H1 (cell line): ENCODE measurements at regions of chr15 and their contacts with region 1.

Region 1: DNA sequence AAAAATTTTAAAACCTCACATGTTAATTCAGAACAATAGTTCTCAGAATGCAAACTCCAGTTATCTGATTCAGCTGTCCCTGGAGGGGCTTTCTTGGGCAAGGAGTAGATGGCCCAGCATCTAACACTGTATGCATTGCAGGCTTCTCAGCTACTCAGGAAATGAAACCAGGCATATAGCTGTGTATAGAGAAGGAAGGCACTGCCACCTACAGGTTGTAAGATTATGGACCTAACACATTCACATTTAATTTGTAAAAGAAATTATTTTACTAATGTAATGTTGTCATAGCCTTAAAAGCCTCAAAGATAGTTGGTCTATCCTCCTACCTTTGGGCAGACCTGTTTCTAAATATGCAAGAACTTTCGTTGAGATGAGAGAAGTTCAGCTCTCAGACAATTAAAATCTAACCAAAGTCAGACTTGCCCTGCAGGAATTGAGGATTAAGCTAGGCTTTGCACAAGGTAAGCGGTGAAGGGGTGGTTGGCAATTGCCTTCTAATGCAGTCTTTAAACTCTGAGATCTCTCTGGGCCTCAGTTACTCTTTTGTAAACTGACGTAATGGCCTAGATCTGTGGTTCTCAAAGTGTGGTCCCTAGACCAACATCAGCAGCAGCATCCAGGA is 132.8 kb upstream of the SLC24A5 start:
- DNase-seq: no peak
- H3K4me3 ChIP-seq: no peak overlapping the region
- H3K27ac ChIP-seq: no peak overlapping the region
- H3K4me1 ChIP-seq: no peaks in the 10 kb centered on the region
- H3K27me3 ChIP-seq: no peaks in the 10 kb centered on the region
- CTCF ChIP-seq: peak in 2 of 3 experiments; percentile 54 to 69; a peak in 3 of 4 replicates
- EP300 ChIP-seq: no peak
- POLR2A ChIP-seq: no peak
- RAD21 ChIP-seq: peak; percentile 93

Region 2: GRCh38 chr15:47196057-47196456 is 792.0 kb before region 1 on chr15:
- CTCF ChIA-PET with region 1: interaction called, 17 read pairs
- POLR2A ChIA-PET with region 1: no interaction called
- DNase-seq: peak; percentile 80 to 82
- H3K4me3 ChIP-seq: peak overlapping the region in 1 of 4 experiments; percentile 10; a peak in 1 of 8 replicates
- H3K27ac ChIP-seq: no peak overlapping the region
- H3K4me1 ChIP-seq: peaks cover 0 to 9% (median 1%) of the 10 kb centered on the region in 4 experiments; a peak in 3 of 7 replicates
- H3K27me3 ChIP-seq: no peaks in the 10 kb centered on the region; a peak in 2 of 7 replicates
- CTCF ChIP-seq: peak; percentile 93 to 96 (median 96)
- EP300 ChIP-seq: no peak
- POLR2A ChIP-seq: no peak
- RAD21 ChIP-seq: peak; percentile 99 to 100

Region 3: DNA sequence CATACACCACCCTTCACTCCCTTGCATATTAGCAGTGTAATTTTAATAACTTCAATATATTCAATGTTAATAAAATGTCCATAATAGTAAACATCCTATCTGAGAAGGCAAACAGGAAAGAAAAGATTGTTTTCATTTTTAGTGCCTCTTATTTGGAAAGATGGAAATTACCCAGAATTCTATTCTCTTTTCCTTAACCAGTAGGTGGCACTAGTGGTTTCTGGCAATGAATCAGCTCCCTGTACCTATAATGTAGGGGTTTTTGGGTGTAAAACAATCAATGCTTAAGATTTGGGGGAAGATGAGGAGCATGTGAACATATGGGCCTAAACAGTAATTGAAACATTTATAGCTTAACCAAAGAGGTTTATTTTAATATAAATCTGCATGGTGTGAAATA is 276.4 kb before region 1 on chr15:
- CTCF ChIA-PET with region 1: interaction called, 38 read pairs
- POLR2A ChIA-PET with region 1: no interaction called
- DNase-seq: no peak
- H3K4me3 ChIP-seq: no peak overlapping the region
- H3K27ac ChIP-seq: no peak overlapping the region
- H3K4me1 ChIP-seq: peaks cover 0 to 7% (median under 1%) of the 10 kb centered on the region in 4 experiments; a peak in 2 of 7 replicates
- H3K27me3 ChIP-seq: no peaks in the 10 kb centered on the region; a peak in 1 of 7 replicates
- CTCF ChIP-seq: peak in 2 of 3 experiments; percentile 47 to 61; a peak in 2 of 4 replicates
- EP300 ChIP-seq: no peak
- POLR2A ChIP-seq: no peak
- RAD21 ChIP-seq: peak; percentile 78 to 80

Region 4: DNA sequence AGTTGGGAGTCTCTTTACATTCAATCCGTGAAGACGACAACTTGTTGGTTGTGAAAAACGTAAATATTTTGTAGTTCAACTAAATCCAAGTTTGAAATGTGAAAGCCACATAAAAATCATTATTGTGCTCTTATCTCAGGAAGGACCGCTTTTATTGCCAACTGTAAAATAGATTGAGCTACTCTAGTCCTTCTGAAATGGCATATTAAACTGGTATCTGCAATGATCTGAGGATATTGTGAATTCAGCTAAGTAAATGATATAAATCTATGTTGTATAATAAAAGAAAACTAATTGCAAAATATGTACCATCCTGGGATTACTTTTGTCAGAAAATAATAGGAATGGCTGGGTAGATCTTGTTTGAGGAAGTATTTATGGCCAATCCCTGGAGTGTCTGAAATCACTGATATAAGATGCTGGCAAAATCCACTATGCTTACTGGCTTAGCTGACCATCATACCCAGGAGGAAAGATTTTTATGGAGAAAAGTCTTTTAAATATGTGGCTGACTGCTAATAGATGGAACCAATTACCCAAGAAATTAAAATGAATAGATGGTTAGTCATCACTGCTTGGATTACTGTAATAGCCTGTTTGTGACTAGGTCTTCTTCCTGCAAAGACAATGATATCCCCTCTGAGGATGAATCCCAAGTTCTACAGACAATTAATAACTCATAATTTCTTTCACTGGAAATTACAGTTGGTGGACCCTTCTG is 78.9 kb before region 1 on chr15:
- CTCF ChIA-PET with region 1: interaction called, 27 read pairs
- POLR2A ChIA-PET with region 1: interaction called, 3 read pairs
- DNase-seq: no peak
- H3K4me3 ChIP-seq: no peak overlapping the region
- H3K27ac ChIP-seq: no peak overlapping the region
- H3K4me1 ChIP-seq: no peaks in the 10 kb centered on the region
- H3K27me3 ChIP-seq: no peaks in the 10 kb centered on the region
- CTCF ChIP-seq: no peak
- EP300 ChIP-seq: no peak
- POLR2A ChIP-seq: no peak
- RAD21 ChIP-seq: no peak

Region 5: DNA sequence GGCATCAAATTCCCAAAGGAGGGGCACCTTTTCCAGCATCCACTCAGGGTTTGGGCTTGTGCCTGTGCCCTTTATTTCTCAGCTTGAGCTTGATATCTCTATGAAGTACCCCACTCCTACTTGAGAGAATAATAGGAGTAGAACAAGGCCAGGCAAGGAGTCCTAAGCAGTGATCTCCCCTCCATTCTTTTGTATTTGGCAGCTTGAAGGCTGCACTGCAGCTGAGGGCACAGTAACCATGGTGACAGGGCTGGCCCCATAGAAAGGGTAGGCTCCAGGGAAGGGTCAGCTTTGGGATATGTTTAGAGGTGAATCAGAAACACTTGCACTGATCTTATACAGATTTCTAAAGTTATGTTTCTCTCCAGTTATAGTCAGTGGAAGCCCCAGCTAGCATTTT is 12.6 kb before region 1 on chr15:
- CTCF ChIA-PET with region 1: interaction called, 31 read pairs
- POLR2A ChIA-PET with region 1: no interaction called
- DNase-seq: no peak
- H3K4me3 ChIP-seq: no peak overlapping the region
- H3K27ac ChIP-seq: no peak overlapping the region
- H3K4me1 ChIP-seq: 0 out of 7 replicates have a peak, but pooled peaks cover 0 to 2% (median 0%) of the 10 kb centered on the region in 4 experiments
- H3K27me3 ChIP-seq: no peaks in the 10 kb centered on the region
- CTCF ChIP-seq: no peak
- EP300 ChIP-seq: no peak
- POLR2A ChIP-seq: no peak
- RAD21 ChIP-seq: no peak

Region 6: GRCh38 chr15:48012191-48012590 is 24.2 kb after region 1 on chr15:
- CTCF ChIA-PET with region 1: no interaction called
- POLR2A ChIA-PET with region 1: no interaction called
- DNase-seq: no peak
- H3K4me3 ChIP-seq: no peak overlapping the region
- H3K27ac ChIP-seq: no peak overlapping the region
- H3K4me1 ChIP-seq: 0 out of 7 replicates have a peak, but pooled peaks cover 0 to 2% (median 0%) of the 10 kb centered on the region in 4 experiments
- H3K27me3 ChIP-seq: no peaks in the 10 kb centered on the region
- CTCF ChIP-seq: no peak
- EP300 ChIP-seq: no peak
- POLR2A ChIP-seq: no peak
- RAD21 ChIP-seq: no peak

Region 7: GRCh38 chr15:48084759-48085590 is 97.0 kb after region 1 on chr15:
- CTCF ChIA-PET with region 1: interaction called, 44 read pairs
- POLR2A ChIA-PET with region 1: no interaction called
- DNase-seq: peak in 1 of 2 experiments; percentile 13
- H3K4me3 ChIP-seq: no peak overlapping the region
- H3K27ac ChIP-seq: no peak overlapping the region
- H3K4me1 ChIP-seq: no peaks in the 10 kb centered on the region
- H3K27me3 ChIP-seq: no peaks in the 10 kb centered on the region
- CTCF ChIP-seq: peak; percentile 28 to 80 (median 72)
- EP300 ChIP-seq: no peak
- POLR2A ChIP-seq: no peak
- RAD21 ChIP-seq: peak; percentile 82 to 89